ENCODE measurements at regions of chr11 and their contacts with region 1.

Region 1: DNA sequence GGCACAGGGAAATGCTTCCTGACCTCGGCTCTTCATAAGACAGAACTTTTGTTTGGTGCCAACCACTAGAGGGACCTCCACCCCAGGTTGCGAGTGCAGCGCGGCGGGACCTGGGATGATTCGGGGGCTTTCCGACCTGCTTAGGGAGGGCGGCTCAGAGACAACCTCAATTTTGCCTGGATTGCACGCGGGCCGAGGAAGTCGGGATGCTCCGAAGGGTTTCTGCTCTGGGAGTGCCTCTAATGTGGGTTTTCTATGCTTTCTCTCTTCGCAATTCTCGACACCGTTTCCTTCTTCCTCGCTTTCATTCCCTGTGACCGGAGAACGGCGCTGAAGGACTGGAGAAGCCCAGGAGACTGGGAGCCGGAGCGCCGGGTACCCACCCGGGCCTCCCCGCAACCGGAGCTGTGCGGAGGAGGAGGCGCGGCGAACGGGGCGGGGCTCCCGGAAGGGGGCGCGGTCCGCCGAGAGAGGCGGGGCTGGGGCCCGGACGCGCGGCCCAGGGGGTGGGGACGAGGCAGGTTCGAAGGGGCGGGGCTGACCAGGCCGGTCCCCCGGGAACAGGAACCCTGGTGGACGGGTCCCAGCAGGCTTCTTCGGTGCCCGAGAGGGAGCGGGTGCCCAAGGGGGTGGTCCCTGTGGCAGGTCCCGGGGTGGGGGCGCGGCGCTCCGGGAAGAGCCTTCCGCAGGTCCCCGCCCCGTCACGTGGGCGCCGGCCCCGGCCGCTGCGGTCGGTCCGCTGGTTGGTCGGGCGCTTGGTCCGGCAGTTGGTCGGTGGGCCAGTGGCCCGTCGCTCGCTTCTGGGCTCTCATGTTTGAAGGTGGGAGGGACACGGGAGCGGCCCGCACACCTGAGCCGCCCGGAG is at the start of gene PPFIBP2:
- DNase-seq: peak; percentile 73 to 90
- ATAC-seq: peak; percentile 92 to 96
- H3K4me3 ChIP-seq: peak within 1 kb of the TSS; percentile 76
- H3K27ac ChIP-seq: peak within 1 kb of the TSS; percentile 75 to 92
- H3K4me1 ChIP-seq: 0 out of 3 replicates have a peak, but pooled peaks cover 6% of the 10 kb centered on the region
- CTCF ChIP-seq: peak; percentile 90
- EP300 ChIP-seq: no peak
- POLR2A ChIP-seq: no peak
- RAD21 ChIP-seq: peak; percentile 71 to 79
- polyA plus RNA-seq, gene PPFIBP2: 32.5 and 58.4 TPM in 2 replicates

Region 2: DNA sequence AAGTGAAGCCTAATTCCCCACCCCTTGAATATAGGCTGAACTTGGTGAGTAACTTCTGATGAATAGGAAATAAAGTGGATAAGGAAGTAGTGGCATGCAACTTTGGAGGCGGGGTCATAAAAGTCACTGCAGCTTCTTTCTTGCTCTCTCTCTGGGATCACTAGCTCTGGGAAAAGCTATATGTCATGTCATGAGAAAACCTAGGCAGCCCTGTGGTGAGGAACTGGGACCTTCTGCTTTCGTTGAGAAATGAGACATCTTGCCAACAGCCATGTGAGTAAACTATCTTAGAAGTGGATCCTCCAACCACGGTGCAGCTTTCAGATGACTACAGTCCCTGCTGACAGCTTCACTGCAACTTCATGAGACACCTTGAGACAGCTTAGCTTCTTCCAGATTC is 509.0 kb before region 1 on chr11:
- CTCF ChIA-PET with region 1: no interaction called
- POLR2A ChIA-PET with region 1: no interaction called
- DNase-seq: peak in 1 of 2 experiments; percentile 7
- ATAC-seq: no peak
- H3K4me3 ChIP-seq: no peak overlapping the region
- H3K27ac ChIP-seq: no peak overlapping the region
- H3K4me1 ChIP-seq: no peaks in the 10 kb centered on the region
- CTCF ChIP-seq: no peak
- EP300 ChIP-seq: no peak
- POLR2A ChIP-seq: no peak
- RAD21 ChIP-seq: no peak

Region 3: DNA sequence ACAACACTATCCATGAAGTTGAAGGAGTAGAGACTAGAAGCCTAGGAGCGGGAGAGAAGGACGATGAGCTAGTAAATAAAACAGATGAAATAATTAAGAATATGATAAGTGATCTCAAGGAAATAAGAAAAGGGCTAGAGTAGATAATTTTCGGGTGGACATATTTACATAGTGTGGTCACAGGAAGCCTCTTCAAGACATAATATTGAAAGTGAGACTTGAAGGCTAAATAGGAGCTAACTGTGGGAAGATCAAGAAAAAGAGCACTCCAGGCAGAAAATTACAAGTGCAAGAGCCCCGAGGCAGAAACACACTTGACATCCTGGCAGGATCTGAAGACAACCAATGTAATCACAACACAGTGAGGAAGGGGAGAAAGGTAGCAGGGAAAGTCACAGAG is 11.6 kb before region 1 on chr11:
- CTCF ChIA-PET with region 1: interaction called, 10 read pairs
- POLR2A ChIA-PET with region 1: no interaction called
- DNase-seq: no peak
- ATAC-seq: no peak
- H3K4me3 ChIP-seq: no peak overlapping the region
- H3K27ac ChIP-seq: no peak overlapping the region
- H3K4me1 ChIP-seq: no peaks in the 10 kb centered on the region
- CTCF ChIP-seq: no peak
- EP300 ChIP-seq: no peak
- POLR2A ChIP-seq: no peak
- RAD21 ChIP-seq: no peak

Region 4: GRCh38 chr11:7651140-7651551 is 137.7 kb after region 1 on chr11:
- CTCF ChIA-PET with region 1: interaction called, 24 read pairs
- POLR2A ChIA-PET with region 1: no interaction called
- DNase-seq: no peak
- ATAC-seq: no peak
- H3K4me3 ChIP-seq: no peak overlapping the region
- H3K27ac ChIP-seq: no peak overlapping the region
- H3K4me1 ChIP-seq: 0 out of 3 replicates have a peak, but pooled peaks cover 3% of the 10 kb centered on the region
- CTCF ChIP-seq: no peak
- EP300 ChIP-seq: no peak
- POLR2A ChIP-seq: no peak
- RAD21 ChIP-seq: no peak

Measured in A549 (cell line).